ENCODE measurements at regions of chr15 and their contacts with region 1.

Region 1: GRCh38 chr15:68875377-68876116 is 54.8 kb upstream of the SPESP1 start:
- DNase-seq: peak; percentile 39
- H3K4me3 ChIP-seq: peak overlapping the region; percentile 12
- H3K27me3 ChIP-seq: peaks cover 4% of the 10 kb centered on the region
- CTCF ChIP-seq: peak; percentile 84

Region 2: DNA sequence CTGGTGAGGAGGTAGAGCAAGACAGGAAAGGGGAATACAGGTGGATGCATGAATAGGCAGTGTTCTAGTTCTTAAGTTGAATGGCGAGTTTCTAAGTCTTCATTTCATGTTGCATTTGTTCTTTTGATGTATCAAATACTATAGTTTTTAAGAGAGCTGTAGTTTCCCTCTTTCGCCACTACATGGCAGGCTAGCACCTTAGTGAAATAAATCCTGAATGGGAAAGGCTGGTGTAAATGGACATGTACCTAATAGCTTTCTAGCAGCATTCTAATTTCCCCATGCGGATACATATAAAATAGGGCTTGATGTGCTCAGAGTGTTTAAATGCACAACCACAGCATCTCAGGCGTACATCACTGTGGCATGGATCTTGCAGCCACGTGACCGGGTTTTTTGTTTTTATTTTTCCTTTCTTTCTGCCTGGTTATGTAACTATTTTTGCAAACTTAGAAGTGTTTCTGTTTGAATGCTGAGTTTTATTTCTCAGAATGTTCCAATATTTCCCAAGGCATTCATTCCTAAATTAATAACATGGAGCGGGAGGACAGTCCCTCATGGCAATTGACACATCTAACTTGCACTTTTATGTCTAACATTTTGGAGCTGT is 622.5 kb before region 1 on chr15:
- CTCF ChIA-PET with region 1: interaction called, 14 read pairs
- POLR2A ChIA-PET with region 1: no interaction called
- DNase-seq: no peak
- H3K4me3 ChIP-seq: no peak overlapping the region
- H3K27me3 ChIP-seq: no peaks in the 10 kb centered on the region
- CTCF ChIP-seq: peak; percentile 85

Region 3: GRCh38 chr15:68658151-68658550 is 217.4 kb before region 1 on chr15:
- CTCF ChIA-PET with region 1: no interaction called
- POLR2A ChIA-PET with region 1: no interaction called
- DNase-seq: no peak
- H3K4me3 ChIP-seq: no peak overlapping the region
- H3K27me3 ChIP-seq: no peaks in the 10 kb centered on the region
- CTCF ChIP-seq: no peak

Region 4: DNA sequence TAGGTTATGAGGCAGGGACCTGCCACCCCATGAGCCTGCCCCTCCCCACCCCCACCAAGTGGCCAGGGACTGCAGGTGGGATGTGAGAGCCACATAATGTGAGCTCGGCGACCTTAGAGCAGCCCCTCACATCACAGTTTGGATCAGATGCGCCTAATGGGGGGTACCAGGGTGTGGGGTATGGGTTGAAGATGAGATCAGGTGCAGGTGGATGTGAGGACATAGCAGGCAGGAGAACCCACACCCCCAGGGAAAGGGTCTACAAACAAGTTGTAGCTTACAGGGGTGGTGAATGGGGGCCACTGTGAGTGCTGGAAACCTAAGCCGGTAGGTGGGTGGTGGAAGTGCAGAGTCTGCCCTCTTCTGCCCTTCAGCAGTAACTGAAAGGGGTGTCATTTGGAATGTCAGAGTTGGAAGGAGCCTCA is 202.8 kb before region 1 on chr15:
- CTCF ChIA-PET with region 1: interaction called, 20 read pairs
- POLR2A ChIA-PET with region 1: no interaction called
- DNase-seq: no peak
- H3K4me3 ChIP-seq: no peak overlapping the region
- H3K27me3 ChIP-seq: no peaks in the 10 kb centered on the region
- CTCF ChIP-seq: peak; percentile 39

Region 5: DNA sequence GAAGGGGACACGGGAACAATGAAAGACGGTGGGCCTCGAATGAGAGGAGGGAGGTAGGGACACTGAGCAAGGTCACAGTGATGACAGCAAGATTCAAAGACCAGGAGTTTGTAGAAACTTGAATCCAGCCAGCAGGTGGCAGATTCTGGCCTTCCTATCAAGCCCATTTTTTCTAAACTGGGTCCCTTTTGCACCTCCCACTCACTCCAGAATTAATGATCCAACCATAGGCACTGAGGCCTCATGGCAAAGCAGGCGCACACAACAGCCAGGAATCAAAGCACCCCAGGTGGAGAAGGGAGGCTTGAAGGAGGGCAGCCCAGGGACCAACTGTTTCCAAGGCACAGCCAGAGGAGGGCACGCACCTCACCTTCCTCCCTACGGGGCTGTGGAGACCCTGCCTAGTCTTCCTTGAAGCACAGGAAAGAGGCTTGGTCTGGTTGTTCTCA is 145.1 kb before region 1 on chr15:
- CTCF ChIA-PET with region 1: interaction called, 26 read pairs
- POLR2A ChIA-PET with region 1: no interaction called
- DNase-seq: no peak
- H3K4me3 ChIP-seq: no peak overlapping the region
- H3K27me3 ChIP-seq: peaks cover 12% of the 10 kb centered on the region
- CTCF ChIP-seq: peak; percentile 50

Region 6: DNA sequence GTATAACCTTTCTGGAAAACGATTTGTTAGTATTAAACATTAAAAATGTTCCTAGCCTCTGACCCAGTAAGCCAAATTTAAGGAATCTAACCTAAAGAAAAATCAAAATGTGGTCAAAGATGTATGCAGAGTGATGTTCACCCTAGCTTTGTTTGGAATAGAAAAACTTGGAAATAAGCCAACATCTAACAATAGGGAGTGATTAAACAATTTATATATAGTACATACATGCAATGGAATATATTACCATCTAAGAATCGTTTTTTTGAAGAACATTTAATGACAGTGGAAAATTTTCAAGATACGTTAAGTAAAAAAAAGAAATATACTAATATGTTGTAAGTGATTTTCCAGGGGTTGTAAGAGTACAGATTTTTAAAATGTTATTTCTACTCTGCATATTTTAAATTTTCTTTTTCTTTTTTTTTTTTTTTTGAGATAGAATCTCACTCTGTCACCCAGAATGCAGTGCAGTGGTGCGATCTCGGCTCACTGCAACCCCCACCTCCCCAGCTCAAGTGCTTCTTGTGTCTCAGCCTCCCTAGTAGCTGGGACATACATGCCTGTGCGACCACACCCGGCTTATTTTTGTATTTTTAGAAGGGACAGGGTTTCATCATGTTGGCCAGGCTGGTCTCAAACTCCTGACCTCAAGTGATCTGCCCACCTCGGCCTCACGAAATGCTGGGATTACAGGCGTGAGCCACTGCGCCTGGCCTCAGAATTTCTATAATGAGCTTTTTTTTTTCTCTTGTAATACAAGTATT is 109.8 kb before region 1 on chr15:
- CTCF ChIA-PET with region 1: no interaction called
- POLR2A ChIA-PET with region 1: no interaction called
- DNase-seq: no peak
- H3K4me3 ChIP-seq: no peak overlapping the region
- H3K27me3 ChIP-seq: peaks cover 4% of the 10 kb centered on the region
- CTCF ChIP-seq: no peak

Region 7: GRCh38 chr15:68783226-68784058 is 92.1 kb before region 1 on chr15:
- CTCF ChIA-PET with region 1: interaction called, 20 read pairs
- POLR2A ChIA-PET with region 1: no interaction called
- DNase-seq: no peak
- H3K4me3 ChIP-seq: no peak overlapping the region
- H3K27me3 ChIP-seq: no peaks in the 10 kb centered on the region
- CTCF ChIP-seq: peak; percentile 68

Region 8: GRCh38 chr15:68862415-68862814 is 13.1 kb before region 1 on chr15:
- CTCF ChIA-PET with region 1: interaction called, 11 read pairs
- POLR2A ChIA-PET with region 1: no interaction called
- DNase-seq: no peak
- H3K4me3 ChIP-seq: no peak overlapping the region
- H3K27me3 ChIP-seq: peaks cover 13% of the 10 kb centered on the region
- CTCF ChIP-seq: no peak

Region 9: GRCh38 chr15:68924866-68925560 is 49.5 kb after region 1 on chr15:
- CTCF ChIA-PET with region 1: interaction called, 20 read pairs
- POLR2A ChIA-PET with region 1: no interaction called
- DNase-seq: peak; percentile 13
- H3K4me3 ChIP-seq: no peak overlapping the region
- H3K27me3 ChIP-seq: peaks cover 6% of the 10 kb centered on the region
- CTCF ChIP-seq: peak; percentile 92

Measured in BJ (cell line).